Dorsolateral prefrontal cortex (tissue), 120 donors: ENCODE measurements at regions of chr12 and their contacts with region 1.

Region 1: DNA sequence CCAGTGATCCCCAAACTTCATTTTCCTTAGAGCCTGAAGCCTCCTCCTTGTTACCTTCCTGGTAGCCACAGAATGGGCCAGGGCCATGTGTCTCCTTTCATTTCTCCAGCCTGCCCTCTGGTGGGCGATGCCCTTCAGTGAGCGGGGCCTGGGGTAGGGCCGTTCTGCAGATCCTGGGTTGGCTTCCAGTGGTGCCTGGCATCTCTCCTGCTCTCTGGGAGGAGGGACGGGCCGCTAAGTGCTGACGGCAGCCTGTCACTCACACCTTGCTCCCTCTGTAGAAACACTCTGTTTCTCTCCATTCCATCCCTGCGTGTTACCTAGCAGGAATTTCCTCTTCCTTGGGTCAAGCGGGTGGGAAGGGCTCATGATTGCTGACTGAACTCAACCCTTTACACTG is 232.1 kb downstream of the CACNA1C start:
- DNase-seq: peak in 8 of 10 donors; percentile 41 to 74 (median 62)
- H3K4me3 ChIP-seq: no peak overlapping the region
- H3K27ac ChIP-seq: peak overlapping the region in 3 of 59 donors; percentile 8 to 28 (median 22)
- H3K27me3 ChIP-seq: no peaks in the 10 kb centered on the region
- CTCF ChIP-seq: peak in 54 of 56 donors; percentile 35 to 72 (median 62)

Region 2: GRCh38 chr12:2049604-2050540 is 235.0 kb before region 1 on chr12:
- intact Hi-C with region 1: loop called (anchors 5 kb)
- DNase-seq: no peak
- H3K4me3 ChIP-seq: no peak overlapping the region
- H3K27ac ChIP-seq: no peak overlapping the region
- H3K27me3 ChIP-seq: peaks cover 0 to 3% (median 0%) of the 10 kb centered on the region in 45 donors
- CTCF ChIP-seq: no peak

Region 3: GRCh38 chr12:2057041-2057794 is 227.6 kb before region 1 on chr12:
- intact Hi-C with region 1: loop called in 1 of 2 experiments (anchors 5 kb)
- DNase-seq: peak in 8 of 10 donors; percentile 45 to 69 (median 63)
- H3K4me3 ChIP-seq: peak overlapping the region in 50 of 59 donors; percentile 2 to 85 (median 41)
- H3K27ac ChIP-seq: peak overlapping the region in 17 of 59 donors; percentile 0 to 65 (median 32)
- H3K27me3 ChIP-seq: no peaks in the 10 kb centered on the region
- CTCF ChIP-seq: peak; percentile 25 to 82 (median 69)

Region 4: GRCh38 chr12:2248901-2249381 is 35.9 kb before region 1 on chr12:
- intact Hi-C with region 1: no loop called
- DNase-seq: peak in 1 of 10 donors; percentile 40
- H3K4me3 ChIP-seq: no peak overlapping the region
- H3K27ac ChIP-seq: peak overlapping the region in 47 of 59 donors; percentile 0 to 88 (median 61)
- H3K27me3 ChIP-seq: no peaks in the 10 kb centered on the region
- CTCF ChIP-seq: no peak

Region 5: DNA sequence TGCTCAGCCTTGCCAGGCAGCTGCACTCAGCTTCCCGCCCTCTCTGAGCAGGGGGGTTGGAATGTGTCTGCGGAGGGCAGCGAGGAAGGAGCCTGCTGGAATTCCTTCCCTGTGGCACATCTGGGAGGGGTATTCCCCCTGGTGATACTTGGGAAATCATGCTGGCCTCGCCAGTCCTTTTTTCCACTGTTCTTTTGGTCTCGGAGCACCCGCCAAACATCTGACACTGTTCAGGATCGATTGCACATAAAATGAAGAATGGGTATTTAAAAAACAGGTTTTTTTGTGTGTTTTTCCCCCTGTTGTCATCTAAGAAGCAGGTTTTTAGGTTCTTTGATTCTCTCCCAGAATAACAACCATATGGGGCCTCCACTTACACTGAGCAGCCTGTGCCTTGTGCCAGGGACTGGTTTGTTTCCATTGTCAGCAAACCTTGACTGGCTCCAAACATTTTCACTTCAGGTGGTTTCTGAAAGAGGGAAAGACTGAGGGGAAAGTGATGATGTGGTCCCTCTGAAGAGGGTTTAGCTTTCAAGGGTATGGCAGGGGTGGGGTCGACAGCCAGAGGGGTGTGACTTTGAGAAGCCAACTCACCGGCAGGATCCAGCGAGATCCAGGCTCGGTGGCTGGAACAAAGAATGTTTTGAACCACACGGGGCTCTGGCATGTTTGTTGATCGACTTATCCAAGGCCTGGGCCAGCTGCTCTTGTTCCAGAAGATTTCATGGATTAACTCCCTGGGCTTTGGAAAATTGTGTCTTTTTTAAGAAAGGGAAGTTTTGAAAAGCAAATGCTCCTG is 17.0 kb before region 1 on chr12:
- intact Hi-C with region 1: no loop called
- DNase-seq: peak in 2 of 10 donors; percentile 25 to 50
- H3K4me3 ChIP-seq: no peak overlapping the region
- H3K27ac ChIP-seq: peak overlapping the region in 45 of 59 donors; percentile 4 to 85 (median 65)
- H3K27me3 ChIP-seq: peaks cover 0 to 5% (median 0%) of the 10 kb centered on the region in 45 donors
- CTCF ChIP-seq: no peak

Region 6: GRCh38 chr12:2319742-2320506 is 35.1 kb after region 1 on chr12:
- intact Hi-C with region 1: no loop called
- DNase-seq: no peak
- H3K4me3 ChIP-seq: no peak overlapping the region
- H3K27ac ChIP-seq: peak overlapping the region in 5 of 59 donors; percentile 2 to 40 (median 23)
- H3K27me3 ChIP-seq: peaks cover 0 to 3% (median 0%) of the 10 kb centered on the region in 45 donors
- CTCF ChIP-seq: no peak